ENCODE measurements at regions of chr9 and their contacts with region 1.

Region 1: GRCh38 chr9:96331236-96331947 is 29.4 kb upstream of the HSD17B3 start:
- DNase-seq: no peak
- H3K4me3 ChIP-seq: no peak overlapping the region
- H3K27ac ChIP-seq: no peak overlapping the region
- H3K4me1 ChIP-seq: no peaks in the 10 kb centered on the region
- H3K27me3 ChIP-seq: no peaks in the 10 kb centered on the region
- CTCF ChIP-seq: no peak

Region 2: DNA sequence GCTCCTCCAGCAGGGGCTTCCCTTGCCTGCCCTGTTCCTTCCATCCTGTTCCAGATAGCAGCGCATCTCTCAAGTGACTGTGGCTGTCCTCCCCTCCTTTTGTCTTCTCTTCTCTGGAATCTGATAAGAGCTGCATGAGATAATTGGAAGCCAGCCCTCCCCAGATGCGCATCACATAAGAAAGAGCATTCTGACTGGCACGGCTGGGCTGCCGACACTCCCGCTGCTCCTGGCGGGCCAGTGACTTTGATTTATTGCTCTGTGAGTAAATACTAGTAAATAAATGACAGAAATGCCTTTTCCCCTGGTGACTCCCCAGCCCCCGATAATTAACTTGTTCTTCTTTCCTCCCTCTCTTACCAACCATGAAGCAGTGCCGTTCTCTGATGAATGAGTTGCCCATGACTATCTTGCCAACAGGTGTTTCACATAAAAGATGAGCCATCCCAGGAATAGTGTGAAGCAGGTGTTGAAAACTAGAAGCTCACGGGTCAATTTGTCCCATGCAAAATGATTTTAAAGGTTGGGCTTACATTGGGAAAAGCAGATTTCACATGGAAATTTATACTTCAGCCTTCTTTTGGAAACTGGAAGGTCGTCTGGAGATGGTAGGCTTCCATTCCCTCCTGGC is 243.6 kb before region 1 on chr9:
- intact Hi-C with region 1: no loop called
- DNase-seq: peak in 4 of 5 donors; percentile 84 to 93 (median 89)
- H3K4me3 ChIP-seq: no peak overlapping the region
- H3K27ac ChIP-seq: no peak overlapping the region
- H3K4me1 ChIP-seq: peaks cover 0 to 7% (median 0%) of the 10 kb centered on the region in 3 donors
- H3K27me3 ChIP-seq: peaks cover 2% of the 10 kb centered on the region
- CTCF ChIP-seq: no peak

Region 3: GRCh38 chr9:96574931-96575351 is 243.5 kb after region 1 on chr9:
- intact Hi-C with region 1: no loop called
- DNase-seq: no peak
- H3K4me3 ChIP-seq: no peak overlapping the region
- H3K27ac ChIP-seq: no peak overlapping the region
- H3K4me1 ChIP-seq: no peaks in the 10 kb centered on the region
- H3K27me3 ChIP-seq: no peaks in the 10 kb centered on the region
- CTCF ChIP-seq: no peak

Region 4: GRCh38 chr9:96661711-96662110 is 330.3 kb after region 1 on chr9:
- intact Hi-C with region 1: loop called (anchors 10 kb)
- DNase-seq: no peak
- H3K4me3 ChIP-seq: no peak overlapping the region
- H3K27ac ChIP-seq: no peak overlapping the region
- H3K4me1 ChIP-seq: no peaks in the 10 kb centered on the region
- H3K27me3 ChIP-seq: no peaks in the 10 kb centered on the region
- CTCF ChIP-seq: no peak

Measured in kidney (tissue), 22 donors.